ENCODE measurements at regions of chr2 and their contacts with region 1.

Region 1: DNA sequence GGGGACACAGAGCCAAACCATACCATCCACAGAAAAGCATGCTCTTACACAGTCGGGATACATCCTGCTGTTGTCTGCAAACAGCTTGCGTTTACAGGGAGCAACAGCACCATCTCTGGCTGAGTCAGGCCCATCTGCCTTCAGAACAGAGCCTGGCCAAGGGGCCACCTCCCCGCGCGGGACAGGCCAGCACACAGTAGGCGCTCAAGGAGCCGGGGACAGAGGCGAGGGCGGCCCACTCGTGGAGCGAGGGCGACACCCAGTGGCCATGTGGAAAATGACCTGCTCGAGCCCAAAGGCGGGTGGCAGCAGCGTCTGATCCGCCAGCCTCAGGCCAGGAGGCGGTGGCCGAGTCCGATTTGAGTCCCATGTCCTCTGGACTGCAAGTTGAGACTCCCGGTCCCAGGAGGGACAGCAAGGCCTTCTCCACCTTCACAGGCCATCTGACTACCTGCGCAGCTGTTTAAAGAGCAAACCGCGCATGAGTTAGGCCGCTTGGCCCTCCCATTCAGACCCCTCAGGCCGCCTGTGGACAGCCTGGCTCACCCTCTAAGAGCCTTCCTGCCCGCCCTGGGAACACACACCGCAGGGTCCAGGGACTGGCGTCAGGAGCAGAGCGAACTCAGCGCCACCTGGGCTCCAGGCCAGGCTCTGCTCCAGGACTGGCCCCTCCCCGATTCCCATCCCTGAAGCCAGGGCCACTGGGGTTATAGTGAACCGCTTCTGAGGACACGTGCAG is 38.3 kb downstream of the TTC32 start:
- DNase-seq: peak; percentile 70
- ATAC-seq: peak; percentile 87
- H3K4me3 Mint-ChIP-seq: no peak overlapping the region
- H3K27ac Mint-ChIP-seq: no peak overlapping the region
- H3K4me1 Mint-ChIP-seq: peaks cover 10% of the 10 kb centered on the region
- H3K27me3 Mint-ChIP-seq: peaks cover 14% of the 10 kb centered on the region
- CTCF ChIP-seq: peak; percentile 82

Region 2: GRCh38 chr2:18387441-18388206 is 1475.8 kb before region 1 on chr2:
- CTCF ChIA-PET with region 1: interaction called, 3 read pairs
- POLR2A ChIA-PET with region 1: no interaction called
- intact Hi-C with region 1: loop called (anchors 1 kb)
- DNase-seq: peak; percentile 36
- ATAC-seq: peak; percentile 61
- H3K4me3 Mint-ChIP-seq: no peak overlapping the region
- H3K27ac Mint-ChIP-seq: no peak overlapping the region
- H3K4me1 Mint-ChIP-seq: peaks cover 5% of the 10 kb centered on the region
- H3K27me3 Mint-ChIP-seq: peaks cover 8% of the 10 kb centered on the region
- CTCF ChIP-seq: no peak

Region 3: DNA sequence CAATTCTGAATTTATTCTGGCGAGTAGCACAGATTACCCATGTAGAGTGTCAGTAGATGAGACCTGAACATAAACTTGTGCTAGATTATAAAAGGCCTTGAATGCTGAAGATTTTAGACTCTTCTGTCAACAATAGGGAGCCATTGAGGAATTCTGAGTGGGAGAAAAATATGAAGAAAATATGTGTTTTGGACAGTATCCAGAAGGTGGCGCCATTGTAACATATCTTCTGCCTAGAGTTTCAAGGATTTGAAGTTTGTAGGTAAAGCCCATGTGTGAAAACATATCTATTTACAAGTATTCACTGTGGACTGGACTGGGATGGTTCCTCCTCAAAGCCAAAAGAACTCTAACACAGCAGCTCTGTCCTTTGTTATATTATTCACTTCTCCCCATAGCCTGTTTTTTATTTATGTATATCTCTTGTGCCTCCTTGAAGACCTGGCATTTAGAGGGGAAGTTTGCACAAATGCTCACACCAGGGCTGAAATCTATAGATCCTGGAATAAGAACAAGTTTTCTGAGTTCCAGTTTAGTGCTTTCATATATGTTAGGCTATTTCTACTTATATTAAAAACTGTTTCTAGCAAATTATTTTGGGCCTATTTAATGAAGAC is 1427.9 kb before region 1 on chr2:
- CTCF ChIA-PET with region 1: no interaction called
- POLR2A ChIA-PET with region 1: no interaction called
- intact Hi-C with region 1: loop called (anchors 1 kb)
- DNase-seq: no peak
- ATAC-seq: no peak
- H3K4me3 Mint-ChIP-seq: no peak overlapping the region
- H3K27ac Mint-ChIP-seq: no peak overlapping the region
- H3K4me1 Mint-ChIP-seq: no peaks in the 10 kb centered on the region
- H3K27me3 Mint-ChIP-seq: no peaks in the 10 kb centered on the region
- CTCF ChIP-seq: no peak

Region 4: DNA sequence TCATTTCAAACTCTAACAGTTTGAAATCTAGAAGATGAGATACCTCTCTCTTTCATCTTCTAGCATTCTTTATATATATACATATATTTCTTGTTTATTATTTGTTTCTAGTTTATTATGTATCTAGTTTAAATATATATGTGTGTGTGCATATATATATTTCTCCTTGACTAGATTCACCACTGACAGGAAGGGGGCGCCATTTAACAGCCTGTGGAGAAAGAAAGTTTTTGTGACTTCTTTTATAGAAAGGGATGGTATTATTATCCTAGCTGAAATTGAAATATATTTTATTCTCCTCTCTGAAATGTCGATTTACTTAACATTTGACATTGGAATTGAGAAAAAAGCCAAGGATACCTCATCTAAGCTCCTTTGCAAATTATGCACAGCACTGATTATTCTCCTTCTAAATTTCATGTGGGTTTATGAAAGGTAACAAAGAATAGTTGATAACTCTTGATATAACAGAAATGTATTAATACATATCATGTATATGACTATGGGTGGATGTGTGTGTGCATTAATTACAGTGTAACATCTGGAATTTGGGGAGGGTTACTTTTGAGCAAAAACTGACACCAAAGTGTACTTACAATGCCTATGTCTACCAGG is 1113.5 kb before region 1 on chr2:
- CTCF ChIA-PET with region 1: no interaction called
- POLR2A ChIA-PET with region 1: no interaction called
- intact Hi-C with region 1: loop called (anchors 1 kb)
- DNase-seq: no peak
- ATAC-seq: no peak
- H3K4me3 Mint-ChIP-seq: no peak overlapping the region
- H3K27ac Mint-ChIP-seq: no peak overlapping the region
- H3K4me1 Mint-ChIP-seq: no peaks in the 10 kb centered on the region
- H3K27me3 Mint-ChIP-seq: no peaks in the 10 kb centered on the region
- CTCF ChIP-seq: peak; percentile 61

Region 5: GRCh38 chr2:19488009-19488691 is 375.3 kb before region 1 on chr2:
- CTCF ChIA-PET with region 1: no interaction called
- POLR2A ChIA-PET with region 1: no interaction called
- intact Hi-C with region 1: no loop called
- DNase-seq: no peak
- ATAC-seq: no peak
- H3K4me3 Mint-ChIP-seq: no peak overlapping the region
- H3K27ac Mint-ChIP-seq: no peak overlapping the region
- H3K4me1 Mint-ChIP-seq: no peaks in the 10 kb centered on the region
- H3K27me3 Mint-ChIP-seq: peaks cover 8% of the 10 kb centered on the region
- CTCF ChIP-seq: no peak

Region 6: GRCh38 chr2:19667085-19667484 is 196.4 kb before region 1 on chr2:
- CTCF ChIA-PET with region 1: no interaction called
- POLR2A ChIA-PET with region 1: no interaction called
- intact Hi-C with region 1: no loop called
- DNase-seq: no peak
- ATAC-seq: no peak
- H3K4me3 Mint-ChIP-seq: no peak overlapping the region
- H3K27ac Mint-ChIP-seq: no peak overlapping the region
- H3K4me1 Mint-ChIP-seq: no peaks in the 10 kb centered on the region
- H3K27me3 Mint-ChIP-seq: peaks cover 11% of the 10 kb centered on the region
- CTCF ChIP-seq: no peak

Region 7: GRCh38 chr2:20148923-20149668 is 285.6 kb after region 1 on chr2:
- CTCF ChIA-PET with region 1: no interaction called
- POLR2A ChIA-PET with region 1: no interaction called
- intact Hi-C with region 1: no loop called
- DNase-seq: no peak
- ATAC-seq: no peak
- H3K4me3 Mint-ChIP-seq: no peak overlapping the region
- H3K27ac Mint-ChIP-seq: no peak overlapping the region
- H3K4me1 Mint-ChIP-seq: peaks cover 1% of the 10 kb centered on the region
- H3K27me3 Mint-ChIP-seq: peaks cover 33% of the 10 kb centered on the region
- CTCF ChIP-seq: no peak